ENCODE measurements at regions of chrX and their contacts with region 1.

Region 1: DNA sequence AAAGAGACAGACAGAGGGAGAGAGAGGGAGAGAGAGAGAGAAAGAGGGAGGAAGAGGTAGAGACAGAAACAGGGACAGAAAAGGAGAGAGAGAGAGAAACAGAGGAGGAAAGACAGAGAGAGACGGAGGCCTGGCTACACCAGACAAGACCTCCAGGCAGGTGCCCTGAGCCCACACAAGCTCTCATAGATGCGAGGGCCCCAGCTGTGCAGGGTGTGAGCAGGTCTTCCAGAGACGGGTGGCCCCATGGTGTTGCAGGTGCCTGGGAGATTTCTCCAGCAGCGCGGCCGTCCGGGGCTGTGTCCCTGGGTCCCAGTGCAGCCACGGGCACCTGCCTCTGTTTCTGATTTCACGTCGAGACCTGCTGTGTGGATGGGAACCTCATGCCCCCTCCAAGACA is 253.0 kb downstream of the SHOX start:
- DNase-seq: no peak
- ATAC-seq: no peak
- H3K4me3 ChIP-seq: no peak overlapping the region
- H3K27ac ChIP-seq: no peak overlapping the region
- H3K4me1 ChIP-seq: no peaks in the 10 kb centered on the region
- H3K27me3 ChIP-seq: no peaks in the 10 kb centered on the region
- CTCF ChIP-seq: no peak
- POLR2A ChIP-seq: no peak

Region 2: DNA sequence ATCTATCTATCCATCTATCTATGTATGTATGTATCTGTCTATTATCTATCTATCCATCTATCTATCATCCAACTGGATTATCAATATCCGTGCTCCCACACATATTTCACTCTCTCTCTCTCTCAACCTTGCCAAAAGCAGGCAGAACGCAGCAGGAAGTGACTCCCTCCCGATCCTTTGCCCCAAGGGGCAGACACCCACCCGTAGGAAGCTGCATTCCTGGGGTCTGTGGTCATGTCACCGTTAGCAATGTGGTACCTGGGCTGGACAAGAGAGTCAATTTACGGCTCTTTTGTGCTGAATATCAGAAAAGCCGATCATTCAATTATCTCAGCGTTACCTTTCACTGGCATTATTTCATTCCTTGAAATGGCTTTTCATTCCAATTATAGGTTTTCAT is 377.2 kb before region 1 on chrX:
- intact Hi-C with region 1: no loop called
- DNase-seq: no peak
- ATAC-seq: no peak
- H3K4me3 ChIP-seq: no peak overlapping the region
- H3K27ac ChIP-seq: no peak overlapping the region
- H3K4me1 ChIP-seq: no peaks in the 10 kb centered on the region
- H3K27me3 ChIP-seq: no peaks in the 10 kb centered on the region
- CTCF ChIP-seq: no peak
- POLR2A ChIP-seq: no peak

Region 3: DNA sequence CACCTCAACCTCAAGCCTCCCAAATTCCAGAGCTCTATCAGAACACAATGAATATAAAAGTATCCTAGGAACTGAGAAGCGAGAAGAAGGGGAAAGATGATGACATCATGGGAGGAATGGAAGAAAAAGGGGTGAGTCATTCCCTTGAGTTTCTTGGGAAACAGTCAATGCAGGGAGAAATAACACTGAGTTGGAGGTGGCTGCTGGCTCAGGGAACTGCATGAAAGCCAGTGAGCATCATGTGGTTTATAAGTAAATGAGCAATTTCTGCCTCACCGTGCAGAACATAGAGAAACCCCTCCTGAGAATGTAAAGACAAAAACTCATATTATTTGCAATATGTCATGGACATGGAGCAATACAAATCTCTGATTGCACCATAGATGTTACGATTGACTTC is 179.7 kb before region 1 on chrX:
- intact Hi-C with region 1: loop called (anchors 5 kb)
- DNase-seq: no peak
- ATAC-seq: no peak
- H3K4me3 ChIP-seq: no peak overlapping the region
- H3K27ac ChIP-seq: no peak overlapping the region
- H3K4me1 ChIP-seq: no peaks in the 10 kb centered on the region
- H3K27me3 ChIP-seq: no peaks in the 10 kb centered on the region
- CTCF ChIP-seq: no peak
- POLR2A ChIP-seq: no peak

Region 4: DNA sequence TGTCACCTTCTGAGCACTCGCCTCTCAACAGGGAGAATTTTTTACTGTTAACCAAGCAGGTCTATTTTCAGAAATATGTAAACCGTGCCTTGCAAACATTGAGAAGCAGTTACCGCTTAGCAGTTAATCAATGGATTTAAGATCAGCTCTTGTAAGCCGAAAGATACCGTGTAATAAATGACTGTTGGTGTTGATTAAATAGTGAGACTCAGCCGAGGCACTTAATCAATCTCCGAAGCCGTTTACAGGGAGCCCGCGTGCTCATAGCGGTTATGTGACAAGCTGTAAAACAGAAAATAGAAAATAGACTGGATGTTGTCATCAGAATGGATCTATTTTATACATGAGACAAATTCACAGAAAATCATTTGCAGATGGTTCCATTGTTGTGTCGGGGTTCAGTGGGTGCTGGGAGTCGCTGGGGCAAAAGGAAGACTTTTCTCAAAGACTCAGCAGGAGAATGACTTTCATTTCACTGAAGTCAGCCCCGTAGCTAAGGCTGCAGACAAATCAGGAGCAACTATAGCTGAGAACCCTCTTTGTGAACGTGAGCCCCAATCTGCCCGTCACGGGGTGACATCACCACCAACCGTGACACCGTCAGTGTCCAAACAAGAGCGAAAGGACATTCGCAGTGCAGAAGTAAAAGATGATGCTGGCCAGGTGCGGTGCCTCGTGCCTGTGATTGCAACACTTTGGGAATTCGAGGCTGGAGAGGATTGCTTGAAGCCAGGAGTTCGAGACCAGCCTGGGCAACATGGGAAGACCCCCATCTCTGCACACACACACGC is 53.6 kb after region 1 on chrX:
- intact Hi-C with region 1: no loop called
- DNase-seq: no peak
- ATAC-seq: no peak
- H3K4me3 ChIP-seq: no peak overlapping the region
- H3K27ac ChIP-seq: no peak overlapping the region
- H3K4me1 ChIP-seq: no peaks in the 10 kb centered on the region
- H3K27me3 ChIP-seq: peaks cover 0 to 3% of the 10 kb centered on the region in 2 donors
- CTCF ChIP-seq: no peak
- POLR2A ChIP-seq: no peak

Region 5: GRCh38 chrX:981721-982626 is 98.4 kb after region 1 on chrX:
- intact Hi-C with region 1: no loop called
- DNase-seq: no peak
- ATAC-seq: no peak
- H3K4me3 ChIP-seq: no peak overlapping the region
- H3K27ac ChIP-seq: no peak overlapping the region
- H3K4me1 ChIP-seq: no peaks in the 10 kb centered on the region
- H3K27me3 ChIP-seq: no peaks in the 10 kb centered on the region
- CTCF ChIP-seq: no peak
- POLR2A ChIP-seq: no peak